Activated CD4-positive, alpha-beta memory T cell treated with anti-CD3 and anti-CD28 coated beads for 36 hours (primary cell): ENCODE measurements at regions of chr15 and their contacts with region 1.

Region 1: GRCh38 chr15:64460206-64460734 is at the start of gene ZNF609:
- DNase-seq: peak; percentile 93
- H3K4me3 Mint-ChIP-seq: peak within 1 kb of the TSS; percentile 87
- H3K27ac Mint-ChIP-seq: peak within 1 kb of the TSS; percentile 89
- H3K4me1 Mint-ChIP-seq: peaks cover 59% of the 10 kb centered on the region
- H3K27me3 Mint-ChIP-seq: no peaks in the 10 kb centered on the region
- total RNA-seq, gene ZNF609: 38.5 to 38.7 TPM

Region 2: DNA sequence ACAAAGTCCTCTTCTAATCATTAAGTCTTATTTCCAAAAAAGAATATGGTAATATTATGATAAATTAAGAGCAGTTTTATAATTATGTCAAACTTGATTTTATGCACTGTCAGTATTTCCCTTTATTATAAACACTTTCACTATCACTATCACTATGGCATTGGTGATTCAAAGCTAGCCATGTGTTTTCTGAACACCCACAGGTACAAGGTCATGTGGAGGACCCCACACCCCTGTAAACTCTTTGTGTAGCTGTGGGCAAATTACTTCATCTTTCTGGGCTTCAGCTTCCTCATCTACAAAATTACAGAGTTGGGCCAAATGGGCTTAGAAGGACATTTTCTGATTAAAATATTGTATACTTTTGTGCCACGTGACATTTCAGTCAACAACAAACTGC is 821.4 kb before region 1 on chr15:
- CTCF ChIA-PET with region 1: no interaction called
- POLR2A ChIA-PET with region 1: no interaction called
- intact Hi-C with region 1: no loop called
- DNase-seq: no peak
- H3K4me3 Mint-ChIP-seq: no peak overlapping the region
- H3K27ac Mint-ChIP-seq: no peak overlapping the region
- H3K4me1 Mint-ChIP-seq: peaks cover 12% of the 10 kb centered on the region
- H3K27me3 Mint-ChIP-seq: no peaks in the 10 kb centered on the region

Region 3: GRCh38 chr15:63783441-63783840 is 676.8 kb before region 1 on chr15:
- CTCF ChIA-PET with region 1: no interaction called
- POLR2A ChIA-PET with region 1: no interaction called
- intact Hi-C with region 1: no loop called
- DNase-seq: no peak
- H3K4me3 Mint-ChIP-seq: no peak overlapping the region
- H3K27ac Mint-ChIP-seq: no peak overlapping the region
- H3K4me1 Mint-ChIP-seq: peaks cover 25% of the 10 kb centered on the region
- H3K27me3 Mint-ChIP-seq: no peaks in the 10 kb centered on the region

Region 4: GRCh38 chr15:64387562-64388168 is 72.6 kb before region 1 on chr15 and contains the start of gene TRIP4:
- CTCF ChIA-PET with region 1: no interaction called
- POLR2A ChIA-PET with region 1: interaction called, 5 read pairs
- intact Hi-C with region 1: loop called (anchors 10 kb)
- DNase-seq: peak; percentile 98
- H3K4me3 Mint-ChIP-seq: peak within 1 kb of the TSS; percentile 97
- H3K27ac Mint-ChIP-seq: peak within 1 kb of the TSS; percentile 85
- H3K4me1 Mint-ChIP-seq: peaks cover 16% of the 10 kb centered on the region
- H3K27me3 Mint-ChIP-seq: no peaks in the 10 kb centered on the region
- total RNA-seq, gene TRIP4: 21.7 to 22.2 TPM

Region 5: GRCh38 chr15:64430000-64430735 is 30.1 kb before region 1 on chr15:
- CTCF ChIA-PET with region 1: interaction called, 4 read pairs
- POLR2A ChIA-PET with region 1: interaction called, 4 read pairs
- intact Hi-C with region 1: loop called (anchors 2 kb)
- DNase-seq: peak; percentile 45
- H3K4me3 Mint-ChIP-seq: no peak overlapping the region
- H3K27ac Mint-ChIP-seq: peak overlapping the region; percentile 75
- H3K4me1 Mint-ChIP-seq: peaks cover 35% of the 10 kb centered on the region
- H3K27me3 Mint-ChIP-seq: no peaks in the 10 kb centered on the region

Region 6: DNA sequence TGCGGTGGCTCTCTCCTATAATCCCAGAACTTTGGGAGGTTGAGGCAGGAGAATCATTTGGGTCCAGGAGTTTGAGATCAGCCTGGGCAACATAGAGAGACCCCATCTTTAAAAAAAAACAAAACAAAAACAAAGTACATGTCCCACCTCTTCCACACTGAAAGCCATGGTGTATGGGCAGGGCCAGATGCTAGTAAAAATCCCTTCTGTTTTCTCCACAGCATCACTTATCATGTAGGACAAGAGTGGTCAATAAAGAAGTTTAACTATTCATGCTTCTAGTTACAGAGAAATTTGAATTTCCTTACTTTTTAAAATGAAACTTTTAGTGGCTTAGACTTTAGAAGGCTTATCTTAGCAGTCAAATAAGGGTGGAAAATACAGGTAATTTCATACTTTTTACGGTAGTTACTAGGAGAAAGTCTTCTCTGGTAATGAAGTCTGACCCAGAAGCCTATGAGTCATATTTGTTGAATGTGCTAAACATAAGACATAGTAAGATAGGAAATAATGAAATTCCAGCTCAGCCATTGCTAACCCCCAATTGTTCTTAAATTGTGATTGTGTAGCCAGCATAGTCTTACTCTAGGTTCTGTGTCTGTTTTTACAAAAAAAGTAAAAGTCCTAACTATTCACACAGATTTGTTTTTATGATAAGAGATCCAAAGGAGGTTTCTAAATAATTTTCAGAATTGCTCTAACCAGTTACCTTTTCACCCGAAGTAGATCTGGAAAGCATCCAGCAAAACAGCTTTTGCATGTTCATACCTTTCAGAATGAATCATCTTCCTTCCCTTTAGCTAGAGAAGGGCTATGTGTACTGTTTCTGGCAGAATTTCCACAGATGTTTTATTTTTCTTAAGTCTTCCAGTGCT is 16.3 kb before region 1 on chr15:
- CTCF ChIA-PET with region 1: interaction called, 11 read pairs
- POLR2A ChIA-PET with region 1: interaction called, 7 read pairs
- intact Hi-C with region 1: loop called (anchors 1 kb)
- DNase-seq: no peak
- H3K4me3 Mint-ChIP-seq: peak overlapping the region; percentile 36
- H3K27ac Mint-ChIP-seq: peak overlapping the region; percentile 91
- H3K4me1 Mint-ChIP-seq: peaks cover 48% of the 10 kb centered on the region
- H3K27me3 Mint-ChIP-seq: no peaks in the 10 kb centered on the region

Region 7: DNA sequence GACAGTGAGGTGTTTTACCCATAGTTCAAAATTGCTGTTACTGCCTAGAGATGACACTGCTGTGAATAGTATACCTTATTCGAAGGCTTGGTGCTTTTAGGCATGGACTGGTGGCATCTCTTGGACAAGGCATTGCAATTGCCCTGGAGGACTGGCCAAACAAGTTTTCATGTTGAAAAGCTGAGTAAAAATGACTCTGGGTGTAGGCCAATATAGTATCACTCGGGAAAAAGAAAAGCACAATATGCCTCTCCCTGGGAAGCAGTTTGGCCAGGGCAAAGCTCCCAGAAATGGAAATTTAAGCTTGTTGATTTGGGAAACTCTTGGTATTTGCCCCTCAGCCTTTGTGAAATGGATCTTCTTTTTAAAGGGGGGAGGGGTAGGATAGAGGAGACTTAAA is 54.9 kb after region 1 on chr15:
- CTCF ChIA-PET with region 1: no interaction called
- POLR2A ChIA-PET with region 1: interaction called, 4 read pairs
- intact Hi-C with region 1: loop called (anchors 5 kb)
- DNase-seq: no peak
- H3K4me3 Mint-ChIP-seq: no peak overlapping the region
- H3K27ac Mint-ChIP-seq: no peak overlapping the region
- H3K4me1 Mint-ChIP-seq: peaks cover 38% of the 10 kb centered on the region
- H3K27me3 Mint-ChIP-seq: no peaks in the 10 kb centered on the region

Region 8: DNA sequence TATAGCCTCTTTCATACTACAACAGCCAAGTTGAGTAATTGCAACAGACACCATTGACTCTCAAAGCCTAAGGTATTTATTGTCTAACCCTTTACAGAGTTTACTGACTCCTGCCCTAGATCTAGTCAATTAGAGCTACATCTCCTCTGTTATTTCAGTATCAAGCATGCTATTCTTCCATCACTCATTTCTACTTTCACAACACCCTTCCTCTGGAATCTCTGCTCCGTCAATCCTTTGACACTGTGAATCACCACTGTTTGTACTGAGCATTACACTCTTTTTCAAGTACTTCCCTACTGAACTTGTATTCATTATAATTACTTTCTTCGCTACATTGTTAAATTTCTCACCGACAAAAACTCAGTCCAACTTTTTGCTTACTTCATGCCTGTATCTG is 121.9 kb after region 1 on chr15:
- CTCF ChIA-PET with region 1: no interaction called
- POLR2A ChIA-PET with region 1: no interaction called
- intact Hi-C with region 1: loop called (anchors 5 kb)
- DNase-seq: no peak
- H3K4me3 Mint-ChIP-seq: no peak overlapping the region
- H3K27ac Mint-ChIP-seq: no peak overlapping the region
- H3K4me1 Mint-ChIP-seq: peaks cover 34% of the 10 kb centered on the region
- H3K27me3 Mint-ChIP-seq: no peaks in the 10 kb centered on the region

Region 9: DNA sequence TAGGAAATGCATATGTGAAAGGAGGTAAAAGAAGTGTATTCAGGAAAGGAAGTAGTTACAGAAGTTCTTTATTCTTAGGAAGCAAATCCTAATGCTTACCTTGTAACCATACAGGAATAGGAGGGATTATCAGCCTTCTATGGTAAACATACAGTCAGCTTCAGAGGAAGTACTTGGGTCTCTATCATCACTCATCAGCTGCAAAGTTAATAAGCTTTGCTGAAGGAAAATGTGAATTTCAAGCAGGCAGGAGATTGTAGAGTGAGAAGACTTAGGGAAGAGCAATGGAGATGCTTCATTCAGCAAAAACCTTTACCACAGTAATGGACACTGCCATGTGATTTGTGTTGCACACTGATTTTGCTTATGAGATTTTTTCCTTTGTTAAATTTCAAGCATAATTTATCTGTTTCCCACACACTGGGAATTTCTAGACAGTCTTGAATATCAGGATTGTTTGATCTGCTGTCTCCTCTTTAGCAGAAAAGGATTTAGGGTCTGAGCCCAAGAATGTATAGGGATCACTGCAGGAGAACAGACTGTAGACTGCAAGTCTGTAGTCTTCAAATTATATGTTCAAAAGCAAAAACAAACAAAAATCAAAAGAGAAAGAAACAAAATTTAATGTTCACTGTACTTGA is 150.9 kb after region 1 on chr15:
- CTCF ChIA-PET with region 1: no interaction called
- POLR2A ChIA-PET with region 1: no interaction called
- intact Hi-C with region 1: no loop called
- DNase-seq: no peak
- H3K4me3 Mint-ChIP-seq: no peak overlapping the region
- H3K27ac Mint-ChIP-seq: no peak overlapping the region
- H3K4me1 Mint-ChIP-seq: peaks cover 31% of the 10 kb centered on the region
- H3K27me3 Mint-ChIP-seq: no peaks in the 10 kb centered on the region